ENCODE measurements at regions of chr9 and their contacts with region 1.

Region 1: GRCh38 chr9:112097712-112098688 is 77.1 kb downstream of the SUSD1 start:
- DNase-seq: peak; percentile 41 to 85 (median 68)
- ATAC-seq: peak; percentile 93
- H3K4me3 ChIP-seq: no peak overlapping the region
- H3K4me3 Mint-ChIP-seq: no peak overlapping the region
- H3K27ac ChIP-seq: no peak overlapping the region
- H3K27ac Mint-ChIP-seq: peak overlapping the region in 1 of 9 donors; percentile 15
- H3K4me1 ChIP-seq: peaks cover 0 to 4% of the 10 kb centered on the region in 2 donors
- H3K4me1 Mint-ChIP-seq: peaks cover 2 to 32% (median 12%) of the 10 kb centered on the region in 7 donors
- H3K27me3 ChIP-seq: no peaks in the 10 kb centered on the region
- H3K27me3 Mint-ChIP-seq: peaks cover 0 to 3% (median 0%) of the 10 kb centered on the region in 5 donors

Region 2: DNA sequence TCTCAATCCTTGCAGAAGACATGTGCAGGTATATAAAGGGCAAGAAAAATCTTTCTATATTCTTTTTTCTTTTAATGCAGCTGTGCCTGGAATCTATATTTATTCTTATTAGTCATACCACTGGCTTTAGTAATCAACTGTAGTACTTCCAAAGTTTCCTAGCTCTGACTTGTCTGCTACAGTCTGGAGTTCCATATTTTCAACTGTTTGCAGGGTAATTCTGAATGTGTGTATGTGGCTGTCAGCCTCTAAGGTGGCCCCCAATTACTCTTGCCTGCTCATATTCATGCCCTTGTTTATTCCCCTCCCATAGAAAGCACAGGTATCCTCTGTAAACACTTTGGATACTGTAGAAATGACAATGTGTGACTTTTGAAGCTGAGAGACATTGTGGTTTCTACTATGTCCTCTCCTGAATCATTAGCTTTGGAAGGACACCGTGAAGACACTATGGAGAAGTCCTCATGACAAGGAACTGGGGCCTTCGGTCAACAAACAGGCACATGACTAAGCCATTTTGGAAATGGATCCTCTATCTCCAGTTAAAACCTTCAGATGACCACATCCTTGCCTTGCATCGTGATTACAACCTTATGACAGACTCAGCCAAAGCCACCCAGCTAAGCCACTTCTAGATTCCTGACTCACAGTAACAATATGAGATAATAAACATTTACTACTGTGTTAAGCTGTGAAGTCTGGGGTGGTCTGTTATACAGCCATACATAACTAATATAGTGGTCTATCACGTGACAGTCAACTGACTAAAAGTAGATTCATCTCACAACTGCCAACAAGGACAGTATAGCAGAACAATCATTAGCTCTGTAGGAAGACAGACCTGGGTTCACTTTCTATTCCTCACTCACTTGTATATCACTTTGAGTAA is 126.6 kb after region 1 on chr9:
- CTCF ChIA-PET with region 1: interaction called, 3 read pairs
- POLR2A ChIA-PET with region 1: no interaction called
- intact Hi-C with region 1: loop called (anchors 10 kb)
- DNase-seq: no peak
- ATAC-seq: peak; percentile 65
- H3K4me3 ChIP-seq: no peak overlapping the region
- H3K4me3 Mint-ChIP-seq: no peak overlapping the region
- H3K27ac ChIP-seq: no peak overlapping the region
- H3K27ac Mint-ChIP-seq: peak overlapping the region in 2 of 9 donors; percentile 2 to 57
- H3K4me1 ChIP-seq: no peaks in the 10 kb centered on the region
- H3K4me1 Mint-ChIP-seq: peaks cover 4 to 22% (median 11%) of the 10 kb centered on the region in 7 donors
- H3K27me3 ChIP-seq: no peaks in the 10 kb centered on the region
- H3K27me3 Mint-ChIP-seq: no peaks in the 10 kb centered on the region